Activated naive CD4-positive, alpha-beta T cell treated with anti-CD3 and anti-CD28 coated beads, Interleukin-2, amount 10 ng/mL, durations not matched to agents 7 days and 5 days (primary cell): ENCODE measurements at regions of chr1 and their contacts with region 1.

Region 1: GRCh38 chr1:20151906-20152598 is 12.9 kb downstream of the PLA2G2F start:
- DNase-seq: peak; percentile 85
- H3K4me3 Mint-ChIP-seq: peak overlapping the region; percentile 69
- H3K27ac Mint-ChIP-seq: no peak overlapping the region
- H3K4me1 Mint-ChIP-seq: peaks cover 16% of the 10 kb centered on the region
- H3K27me3 Mint-ChIP-seq: peaks cover 27% of the 10 kb centered on the region

Region 2: DNA sequence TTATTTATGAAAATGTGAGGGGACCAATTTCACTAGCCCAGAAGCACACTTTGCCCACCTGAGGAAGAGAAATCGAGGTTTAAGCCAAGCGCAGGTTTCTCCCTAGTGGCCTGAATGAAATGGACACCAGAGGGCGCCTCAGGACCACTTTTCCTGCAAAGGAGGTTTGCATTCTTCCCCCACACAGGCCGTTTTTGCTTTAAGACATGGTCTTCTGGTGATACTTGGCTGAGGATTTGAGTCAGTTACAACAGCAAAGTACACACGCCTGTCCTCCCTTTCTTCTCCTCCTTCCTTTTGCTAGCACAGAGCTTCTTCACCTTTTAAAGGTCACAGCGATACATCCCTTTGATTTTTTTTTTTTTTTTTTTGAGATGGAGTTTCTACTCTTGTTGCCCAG is 234.0 kb before region 1 on chr1:
- CTCF ChIA-PET with region 1: interaction called, 51 read pairs
- DNase-seq: peak; percentile 88
- H3K4me3 Mint-ChIP-seq: no peak overlapping the region
- H3K27ac Mint-ChIP-seq: no peak overlapping the region
- H3K4me1 Mint-ChIP-seq: no peaks in the 10 kb centered on the region
- H3K27me3 Mint-ChIP-seq: peaks cover 6% of the 10 kb centered on the region

Region 3: DNA sequence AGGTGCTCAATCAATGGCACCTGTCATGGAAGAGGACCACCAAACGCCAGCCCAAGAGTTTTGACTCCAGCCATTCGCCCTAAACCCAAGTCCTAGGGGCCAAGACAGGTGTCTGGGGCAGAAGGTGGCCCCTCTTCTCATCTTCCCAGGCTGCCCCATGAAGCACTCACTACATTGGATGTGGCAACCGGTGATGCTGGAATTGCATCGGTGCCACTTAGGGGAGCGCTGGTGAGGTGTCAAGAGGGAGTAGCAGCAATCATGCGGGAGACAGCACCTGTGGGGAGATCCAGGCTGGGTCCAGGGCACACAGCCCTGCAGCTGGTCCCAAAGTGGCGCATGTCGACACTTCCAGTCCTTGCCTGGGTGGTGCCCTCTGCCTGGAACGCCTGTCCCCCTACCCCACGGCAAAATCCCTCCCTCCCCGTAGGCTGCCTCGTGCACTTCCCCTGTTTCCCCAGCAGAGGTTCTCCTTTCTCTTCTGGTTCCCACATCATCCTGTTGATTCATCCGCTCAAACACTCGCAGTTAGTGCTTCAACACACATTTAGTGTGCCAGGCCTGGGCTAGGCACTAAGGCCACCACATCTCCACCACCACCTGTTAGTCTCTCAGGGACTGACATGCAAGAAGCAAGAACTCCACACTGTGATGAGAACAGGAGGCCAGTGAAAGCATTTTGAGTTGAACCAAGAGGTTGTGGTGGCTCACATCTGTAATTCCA is 51.3 kb before region 1 on chr1:
- CTCF ChIA-PET with region 1: interaction called, 23 read pairs
- DNase-seq: peak; percentile 48
- H3K4me3 Mint-ChIP-seq: no peak overlapping the region
- H3K27ac Mint-ChIP-seq: no peak overlapping the region
- H3K4me1 Mint-ChIP-seq: no peaks in the 10 kb centered on the region
- H3K27me3 Mint-ChIP-seq: peaks cover 5% of the 10 kb centered on the region